ENCODE measurements at regions of chr2 and their contacts with region 1.

Region 1: DNA sequence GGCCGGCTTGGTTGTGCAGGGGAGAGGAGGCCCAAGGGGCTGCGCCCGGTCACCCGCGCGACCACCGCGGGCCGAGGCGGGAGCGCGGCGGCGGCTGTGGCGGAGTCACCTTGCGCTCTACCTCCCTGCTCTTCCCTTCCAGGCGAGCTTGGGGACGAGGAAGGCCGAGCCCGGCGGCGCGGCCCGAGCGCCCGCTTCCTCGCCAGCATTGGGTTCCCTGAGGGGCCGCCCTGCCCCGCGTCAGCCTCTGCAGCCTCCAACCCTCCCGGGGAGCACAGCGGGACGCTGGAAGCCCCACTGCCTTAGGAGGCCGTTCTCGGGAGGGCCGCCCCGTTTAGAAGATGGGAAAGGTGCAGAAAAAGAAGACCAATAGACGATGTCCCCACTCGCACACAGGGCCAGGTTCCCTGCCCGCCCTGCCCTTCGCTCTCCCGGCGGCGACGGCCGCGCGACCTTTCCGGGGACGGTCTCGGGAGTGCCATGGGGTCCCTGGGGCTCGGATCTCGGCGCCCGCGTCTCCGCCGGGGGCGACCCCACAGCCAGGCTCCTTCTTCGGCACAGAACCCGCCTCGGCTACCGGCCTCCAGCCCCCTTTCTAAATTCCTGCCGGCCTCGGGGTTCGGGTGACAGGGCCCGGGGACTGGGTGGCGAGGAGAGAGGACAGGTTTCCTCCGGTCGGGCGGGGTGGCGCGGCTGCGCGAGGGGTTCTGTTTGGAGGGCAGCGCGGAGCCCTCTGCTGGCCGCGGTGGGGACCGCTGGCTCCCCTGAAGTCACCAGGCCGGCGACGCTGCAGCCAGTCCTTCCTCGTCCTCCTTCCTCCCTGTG is 85.5 kb downstream of the HS6ST1 start:
- DNase-seq: peak; percentile 97
- H3K4me3 ChIP-seq: peak overlapping the region; percentile 62 to 81
- H3K27ac ChIP-seq: no peak overlapping the region
- H3K4me1 ChIP-seq: peaks cover 2 to 4% of the 10 kb centered on the region in 2 experiments; a peak in 1 of 4 replicates
- H3K27me3 ChIP-seq: no peaks in the 10 kb centered on the region; the same call in 1 of the 2 replicates
- CTCF ChIP-seq: peak; percentile 80
- EP300 ChIP-seq: no peak
- RAD21 ChIP-seq: peak; percentile 66

Region 2: DNA sequence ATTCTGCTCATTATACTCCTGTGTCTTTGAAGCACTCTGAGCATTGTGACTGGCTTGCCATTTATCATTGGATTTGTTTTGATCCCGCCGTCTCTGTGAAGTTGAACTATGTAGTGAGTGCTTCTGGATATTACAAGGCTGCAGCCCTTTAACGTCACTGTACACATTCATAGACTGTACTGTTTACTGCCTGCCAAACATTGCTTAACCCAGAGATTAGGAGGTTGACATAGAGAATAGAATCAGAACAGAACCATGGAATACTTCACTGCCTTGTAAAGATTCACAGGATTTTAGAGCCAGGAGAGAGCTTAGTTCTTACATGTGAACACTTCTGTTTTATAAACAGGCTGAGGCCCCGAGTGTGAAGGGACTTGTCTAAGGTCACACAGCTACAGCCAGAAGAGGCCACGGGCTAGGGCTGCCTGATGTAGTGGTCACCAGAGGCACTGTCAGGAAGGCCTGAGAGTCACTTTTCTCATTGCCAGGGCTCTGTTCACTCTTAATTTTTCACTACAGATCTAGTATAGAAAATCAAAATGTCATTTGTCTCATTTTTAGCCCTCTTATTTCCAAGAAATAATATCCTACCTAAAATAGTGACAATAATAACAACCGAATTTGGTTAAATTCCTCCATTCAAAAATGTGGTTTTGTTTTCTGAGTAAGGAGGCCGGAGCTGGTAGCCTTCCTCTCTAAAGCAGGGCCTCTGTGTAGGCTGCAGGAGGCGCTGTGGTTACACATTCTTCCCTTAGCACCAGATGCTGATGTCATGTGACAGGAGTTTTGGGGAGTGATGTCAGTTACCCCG is 54.3 kb before region 1 on chr2:
- CTCF ChIA-PET with region 1: interaction called, 17 read pairs
- POLR2A ChIA-PET with region 1: no interaction called
- DNase-seq: peak; percentile 59
- H3K4me3 ChIP-seq: no peak overlapping the region; a peak in 1 of 4 replicates
- H3K27ac ChIP-seq: no peak overlapping the region; a peak in 1 of 4 replicates
- H3K4me1 ChIP-seq: peaks cover 0 to 3% of the 10 kb centered on the region in 2 experiments; a peak in 1 of 4 replicates
- H3K27me3 ChIP-seq: no peaks in the 10 kb centered on the region
- CTCF ChIP-seq: peak; percentile 85
- EP300 ChIP-seq: no peak
- RAD21 ChIP-seq: peak; percentile 76

Region 3: DNA sequence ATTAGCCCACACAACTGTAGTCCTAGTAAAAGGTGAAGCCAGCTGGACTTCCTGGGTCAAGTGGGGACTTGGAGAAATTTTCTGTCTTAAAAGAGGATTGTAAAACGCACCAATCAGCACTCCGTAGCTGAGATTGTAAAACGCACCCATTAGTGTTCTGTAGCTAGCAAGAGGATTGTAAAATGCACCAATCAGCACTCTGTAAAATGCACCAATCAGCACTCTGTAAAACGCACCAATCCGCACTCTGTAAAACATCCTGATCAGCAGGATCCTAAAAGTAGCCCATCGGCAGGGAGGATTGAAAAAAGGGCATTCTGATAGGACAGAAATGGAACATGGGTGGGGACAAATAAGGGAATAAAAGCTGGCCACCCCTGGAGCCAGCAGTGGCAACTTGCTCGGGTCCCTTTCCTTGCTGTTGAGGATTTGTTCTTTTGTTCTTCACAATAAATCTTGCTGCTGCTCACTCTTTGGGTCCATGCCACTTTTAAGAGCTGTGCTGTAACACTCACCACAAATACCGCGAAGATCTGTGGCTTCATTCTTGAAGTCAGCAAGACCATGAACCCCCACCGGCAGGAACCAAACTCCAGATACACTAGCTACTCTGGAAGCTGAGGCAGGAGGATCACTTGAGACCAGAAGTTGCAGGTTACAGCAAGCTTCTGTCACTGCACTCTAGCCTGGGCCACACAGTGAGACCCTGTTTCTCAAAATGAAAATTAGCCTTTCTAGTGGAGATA is 17.1 kb before region 1 on chr2:
- CTCF ChIA-PET with region 1: interaction called, 20 read pairs
- POLR2A ChIA-PET with region 1: no interaction called
- DNase-seq: no peak
- H3K4me3 ChIP-seq: no peak overlapping the region
- H3K27ac ChIP-seq: no peak overlapping the region
- H3K4me1 ChIP-seq: no peaks in the 10 kb centered on the region
- H3K27me3 ChIP-seq: no peaks in the 10 kb centered on the region
- CTCF ChIP-seq: no peak
- EP300 ChIP-seq: no peak
- RAD21 ChIP-seq: no peak

Region 4: DNA sequence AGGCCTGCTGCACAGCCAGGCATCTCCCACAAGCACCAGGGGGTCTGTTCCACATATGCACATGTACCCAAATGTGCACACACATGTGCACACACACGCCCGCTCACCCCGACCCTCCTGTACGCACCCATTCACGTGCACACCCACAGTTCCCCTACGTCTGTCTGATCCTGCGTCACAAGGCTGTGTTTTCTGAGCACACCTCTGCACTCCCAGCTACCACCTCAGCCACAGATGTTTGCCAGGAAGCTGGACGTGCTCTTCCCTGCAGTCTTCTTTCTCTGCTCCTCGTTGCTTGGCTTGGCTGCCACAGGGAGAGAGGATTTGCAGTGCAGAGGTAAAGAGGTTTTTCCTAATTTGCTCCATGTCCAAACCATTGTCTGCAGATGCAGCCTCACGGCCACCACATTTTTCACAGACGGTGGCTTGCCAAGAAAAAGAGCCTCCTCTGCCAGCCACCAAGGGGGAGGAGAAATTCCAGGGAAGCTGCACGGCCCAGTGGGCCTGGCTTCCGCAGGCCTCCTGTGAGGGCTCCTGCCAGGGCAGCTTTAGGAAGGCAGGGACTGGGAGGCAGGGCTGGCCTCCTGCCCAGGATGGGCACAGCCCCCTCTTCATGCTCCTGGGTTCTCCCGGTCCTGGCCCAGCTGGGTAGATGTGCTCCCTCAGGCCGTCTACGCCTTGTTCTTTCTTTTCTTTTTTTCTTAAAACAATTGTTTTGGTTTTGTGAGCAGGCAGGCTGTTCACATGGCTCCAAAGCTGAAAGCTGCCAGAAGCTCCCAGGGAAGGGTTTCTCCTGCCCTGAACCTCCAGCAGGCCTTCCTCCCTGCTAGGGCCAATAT is 114.7 kb after region 1 on chr2:
- CTCF ChIA-PET with region 1: no interaction called
- POLR2A ChIA-PET with region 1: no interaction called
- DNase-seq: peak; percentile 85
- H3K4me3 ChIP-seq: no peak overlapping the region
- H3K27ac ChIP-seq: peak overlapping the region in 1 of 2 experiments; percentile 92; a peak in 2 of 4 replicates
- H3K4me1 ChIP-seq: peaks cover 9 to 25% of the 10 kb centered on the region in 2 experiments; a peak in 2 of 4 replicates
- H3K27me3 ChIP-seq: no peaks in the 10 kb centered on the region
- CTCF ChIP-seq: no peak
- EP300 ChIP-seq: 0 out of 4 replicates have a peak, but pooled peaks of 1 of the 2 experiments have one; percentile 24
- RAD21 ChIP-seq: peak; percentile 20; the same call in 1 of the 2 replicates

Region 5: GRCh38 chr2:128362846-128363228 is 129.7 kb after region 1 on chr2:
- CTCF ChIA-PET with region 1: no interaction called
- POLR2A ChIA-PET with region 1: no interaction called
- DNase-seq: no peak
- H3K4me3 ChIP-seq: no peak overlapping the region
- H3K27ac ChIP-seq: no peak overlapping the region
- H3K4me1 ChIP-seq: peaks cover 5 to 35% of the 10 kb centered on the region in 2 experiments; a peak in 2 of 4 replicates
- H3K27me3 ChIP-seq: no peaks in the 10 kb centered on the region
- CTCF ChIP-seq: no peak
- EP300 ChIP-seq: no peak
- RAD21 ChIP-seq: no peak

Measured in SK-N-SH (cell line).